Activated T-helper 1 cell treated with anti-CD3 and anti-CD28 coated beads, Interleukin-12 subunit alpha, Interleukin-12 subunit beta, Interleukin-2, Interleukin-4 antibody, amounts not matched to agents 30 ng/mL and 10 ng/mL and 1 ng/mL, durations not matched to agents 14 hours and 24 hours and 36 hours (primary cell): ENCODE measurements at regions of chr12 and their contacts with region 1.

Region 1: DNA sequence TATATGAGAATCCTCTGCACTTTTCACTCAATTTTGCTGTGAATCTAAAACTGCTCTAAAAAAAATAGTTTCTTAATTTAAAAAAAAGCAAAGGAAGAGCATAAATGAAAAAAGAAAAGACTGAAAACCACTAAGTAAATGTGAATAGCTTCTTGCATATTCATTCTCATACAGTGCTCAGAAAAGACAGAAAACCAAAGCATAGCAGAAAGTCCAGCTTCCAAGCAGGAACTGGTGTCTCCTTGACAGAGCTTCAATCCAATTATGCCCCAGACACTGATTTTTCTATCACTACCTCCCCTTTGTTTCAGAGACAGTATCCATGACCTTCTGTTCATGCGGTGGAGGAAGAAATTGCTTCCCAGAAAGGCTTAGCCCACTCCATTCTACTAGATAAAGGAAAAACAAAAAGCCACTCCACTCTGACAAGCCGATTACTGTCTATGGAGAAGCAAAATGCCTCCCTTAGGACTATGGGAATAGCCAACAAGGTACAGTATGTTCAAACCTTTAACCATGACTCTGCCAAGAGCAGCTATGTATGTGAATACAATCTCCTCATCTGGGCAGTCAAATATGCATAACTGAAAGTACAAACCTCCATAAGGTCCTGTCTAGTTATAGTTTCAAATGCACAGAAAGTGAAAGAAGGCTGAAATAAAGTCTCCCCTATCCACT is 40.6 kb downstream of the ATF7 start:
- DNase-seq: no peak
- H3K4me3 Mint-ChIP-seq: no peak overlapping the region
- H3K27ac Mint-ChIP-seq: peak overlapping the region; percentile 14
- H3K4me1 Mint-ChIP-seq: peaks cover 24% of the 10 kb centered on the region
- H3K27me3 Mint-ChIP-seq: no peaks in the 10 kb centered on the region

Region 2: GRCh38 chr12:53414756-53415417 is 170.7 kb before region 1 on chr12:
- intact Hi-C with region 1: no loop called
- DNase-seq: no peak
- H3K4me3 Mint-ChIP-seq: no peak overlapping the region
- H3K27ac Mint-ChIP-seq: peak overlapping the region; percentile 36
- H3K4me1 Mint-ChIP-seq: peaks cover 38% of the 10 kb centered on the region
- H3K27me3 Mint-ChIP-seq: no peaks in the 10 kb centered on the region

Region 3: DNA sequence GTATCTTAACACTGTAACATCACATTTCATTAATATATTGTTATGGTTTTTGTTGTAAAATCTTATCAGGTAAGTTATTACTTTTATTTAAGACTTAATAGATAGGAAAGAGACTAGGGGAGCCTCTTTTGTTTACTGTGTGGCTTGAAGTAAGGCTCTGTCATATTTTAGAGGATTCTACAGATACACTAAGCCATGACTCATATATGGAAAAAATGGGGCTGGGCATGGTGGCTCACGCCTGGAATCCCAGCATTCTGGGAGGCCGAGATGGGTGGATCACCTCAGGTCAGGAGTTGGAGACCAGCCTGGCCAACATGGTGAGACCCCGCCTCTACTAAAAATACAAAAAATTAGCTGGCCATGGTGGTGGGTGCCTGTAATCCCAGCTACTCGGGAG is 54.7 kb before region 1 on chr12:
- intact Hi-C with region 1: no loop called
- DNase-seq: no peak
- H3K4me3 Mint-ChIP-seq: no peak overlapping the region
- H3K27ac Mint-ChIP-seq: no peak overlapping the region
- H3K4me1 Mint-ChIP-seq: no peaks in the 10 kb centered on the region
- H3K27me3 Mint-ChIP-seq: no peaks in the 10 kb centered on the region

Region 4: GRCh38 chr12:53543539-53543938 is 42.0 kb before region 1 on chr12:
- intact Hi-C with region 1: loop called (anchors 5 kb)
- DNase-seq: peak; percentile 38
- H3K4me3 Mint-ChIP-seq: no peak overlapping the region
- H3K27ac Mint-ChIP-seq: peak overlapping the region; percentile 75
- H3K4me1 Mint-ChIP-seq: peaks cover 13% of the 10 kb centered on the region
- H3K27me3 Mint-ChIP-seq: no peaks in the 10 kb centered on the region

Region 5: DNA sequence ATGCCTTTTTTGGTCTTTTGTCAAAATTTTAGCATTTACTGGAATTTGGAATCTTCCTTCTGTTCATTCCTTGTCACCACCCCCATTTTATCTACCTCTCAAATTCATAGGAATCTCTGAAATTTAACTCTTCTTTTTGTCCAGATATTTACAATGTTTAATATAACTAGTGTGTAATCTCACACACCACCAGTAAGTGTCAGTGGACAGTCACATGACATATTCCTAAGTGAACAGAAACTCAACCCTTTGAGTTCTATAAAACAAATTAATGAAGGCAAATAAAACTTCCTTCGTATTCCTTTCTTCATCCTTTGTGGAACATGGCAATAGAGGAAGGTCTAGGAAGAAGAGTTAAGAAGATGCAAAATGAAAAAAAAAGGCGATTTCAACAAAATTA is 14.0 kb after region 1 on chr12:
- intact Hi-C with region 1: loop called (anchors 1 kb)
- DNase-seq: no peak
- H3K4me3 Mint-ChIP-seq: no peak overlapping the region
- H3K27ac Mint-ChIP-seq: no peak overlapping the region
- H3K4me1 Mint-ChIP-seq: peaks cover 15% of the 10 kb centered on the region
- H3K27me3 Mint-ChIP-seq: no peaks in the 10 kb centered on the region

Region 6: GRCh38 chr12:53645165-53645564 is 59.6 kb after region 1 on chr12:
- intact Hi-C with region 1: no loop called
- DNase-seq: no peak
- H3K4me3 Mint-ChIP-seq: no peak overlapping the region
- H3K27ac Mint-ChIP-seq: no peak overlapping the region
- H3K4me1 Mint-ChIP-seq: no peaks in the 10 kb centered on the region
- H3K27me3 Mint-ChIP-seq: peaks cover 9% of the 10 kb centered on the region

Region 7: DNA sequence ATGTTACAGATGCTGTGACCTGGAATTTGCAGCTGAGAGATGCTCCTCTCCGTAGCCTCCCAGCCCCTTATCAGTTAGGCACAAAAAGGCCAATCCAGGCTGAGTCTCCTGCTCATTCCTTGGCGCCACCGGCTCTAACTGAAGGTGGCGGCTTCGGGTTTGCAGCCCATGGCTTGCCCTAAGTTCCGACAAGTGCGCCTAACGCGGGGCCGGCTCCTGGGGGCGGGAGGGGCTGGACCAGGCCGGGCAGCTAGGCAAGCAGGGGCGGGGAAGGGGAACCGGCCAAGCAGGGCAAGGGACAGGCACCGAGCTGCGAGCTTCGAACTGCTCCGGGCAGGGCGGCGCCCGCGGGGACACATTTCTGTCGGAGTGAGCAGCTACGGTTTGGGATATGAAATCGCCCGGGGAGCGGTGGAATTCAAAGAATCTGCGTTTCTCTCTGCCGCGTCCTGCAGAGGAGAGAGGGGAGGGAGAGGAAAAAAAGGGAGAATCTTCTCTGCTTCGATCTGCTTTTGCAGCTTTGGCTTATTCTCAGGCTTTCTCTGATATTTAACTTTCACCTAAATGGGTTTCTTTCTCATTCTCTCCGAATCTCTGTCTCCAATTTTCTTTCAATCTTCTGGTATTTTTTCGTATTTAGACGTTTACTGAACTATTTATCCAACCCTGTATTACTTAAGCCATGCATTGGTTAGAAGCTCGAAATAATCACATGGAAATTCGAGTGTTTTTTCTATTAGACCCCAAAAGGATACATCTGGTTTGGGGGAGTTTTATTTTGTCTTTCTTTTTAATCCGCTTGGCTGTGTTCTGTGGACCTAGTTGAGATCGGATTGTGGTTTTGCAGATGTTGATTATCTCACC is 367.5 kb after region 1 on chr12:
- intact Hi-C with region 1: no loop called
- DNase-seq: no peak
- H3K4me3 Mint-ChIP-seq: no peak overlapping the region
- H3K27ac Mint-ChIP-seq: peak overlapping the region; percentile 44
- H3K4me1 Mint-ChIP-seq: no peaks in the 10 kb centered on the region
- H3K27me3 Mint-ChIP-seq: peaks cover 88% of the 10 kb centered on the region